A673 (cell line): ENCODE measurements at regions of chr12 and their contacts with region 1.

Region 1: DNA sequence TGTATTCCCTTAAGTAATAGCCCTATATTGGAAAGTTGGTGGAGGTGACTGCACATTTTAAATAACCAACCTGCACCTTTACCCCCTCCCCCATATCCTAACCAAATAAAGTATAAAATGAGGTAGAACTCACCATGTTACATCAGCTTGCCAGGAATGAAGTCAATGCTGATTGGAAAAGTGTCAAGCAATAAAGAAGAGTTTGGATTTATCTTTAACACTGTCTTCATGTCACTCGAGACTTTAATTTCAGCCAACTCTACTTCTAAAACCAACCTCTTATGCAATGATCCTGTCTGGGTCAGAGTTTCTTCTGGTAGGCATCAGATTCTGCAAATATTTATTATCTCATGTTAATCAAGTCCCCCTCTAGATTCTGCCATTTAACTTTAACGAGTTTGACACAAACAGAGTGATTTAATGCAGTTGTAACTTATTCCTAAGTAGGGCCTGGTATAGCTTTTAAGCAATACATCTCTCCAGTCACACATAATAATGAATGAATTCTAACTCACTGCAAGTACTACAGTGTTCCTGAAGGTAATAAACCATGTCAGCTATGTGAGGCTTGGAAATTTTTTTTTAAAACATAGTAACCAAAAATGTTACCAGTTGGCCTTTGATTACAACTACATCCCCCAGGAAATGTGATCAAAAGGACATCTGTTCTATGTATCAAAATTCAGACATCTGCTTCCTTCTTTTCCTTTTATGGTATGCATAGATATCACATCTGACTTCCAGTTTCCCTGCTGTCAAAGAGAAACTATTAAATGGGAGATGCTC is 98.7 kb downstream of the ERGIC2 start:
- DNase-seq: peak; percentile 76
- H3K4me3 ChIP-seq: no peak overlapping the region
- H3K27ac ChIP-seq: peak overlapping the region; percentile 68
- H3K4me1 ChIP-seq: peaks cover 23% of the 10 kb centered on the region
- H3K27me3 ChIP-seq: no peaks in the 10 kb centered on the region
- CTCF ChIP-seq: no peak

Region 2: GRCh38 chr12:27602516-27602915 is 1679.7 kb before region 1 on chr12:
- CTCF ChIA-PET with region 1: no interaction called
- POLR2A ChIA-PET with region 1: no interaction called
- intact Hi-C with region 1: loop called (anchors 10 kb)
- DNase-seq: no peak
- H3K4me3 ChIP-seq: no peak overlapping the region
- H3K27ac ChIP-seq: no peak overlapping the region
- H3K4me1 ChIP-seq: peaks cover 4% of the 10 kb centered on the region
- H3K27me3 ChIP-seq: no peaks in the 10 kb centered on the region
- CTCF ChIP-seq: no peak

Region 3: DNA sequence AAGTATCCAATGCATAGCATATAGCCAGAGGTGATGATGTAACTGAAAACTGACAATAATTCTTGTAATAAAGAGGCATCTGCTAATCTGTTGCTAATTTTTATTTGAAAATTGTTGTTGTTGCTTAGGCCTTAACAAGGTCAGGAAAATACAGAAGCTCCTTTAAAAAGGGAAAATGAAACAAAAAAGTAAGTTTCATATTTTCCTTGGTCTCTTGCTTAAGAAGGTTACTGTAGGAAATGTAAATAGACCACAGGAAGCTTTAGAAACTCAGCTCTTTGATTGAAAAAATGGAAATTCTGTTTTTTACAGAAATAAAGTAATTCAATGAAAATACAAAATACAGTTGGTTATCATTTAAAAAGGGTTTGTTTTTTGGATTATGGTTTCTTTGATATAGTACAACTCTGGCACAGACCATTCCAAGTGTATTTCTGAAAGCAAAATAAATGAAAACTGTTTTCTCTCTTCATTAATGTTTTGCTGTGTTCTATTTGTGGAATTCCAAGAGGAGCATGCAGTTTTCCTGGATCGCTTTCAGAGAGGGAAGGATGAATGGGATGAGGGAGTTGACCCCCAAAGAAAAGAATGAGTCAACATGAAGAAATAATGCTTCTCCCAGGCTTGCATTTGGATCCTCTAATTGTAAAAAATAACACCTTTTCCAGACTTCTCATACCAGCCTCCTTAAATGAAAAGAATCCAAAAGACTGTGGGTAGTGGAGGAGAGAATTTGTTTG is 531.1 kb before region 1 on chr12:
- CTCF ChIA-PET with region 1: no interaction called
- POLR2A ChIA-PET with region 1: no interaction called
- intact Hi-C with region 1: no loop called
- DNase-seq: no peak
- H3K4me3 ChIP-seq: no peak overlapping the region
- H3K27ac ChIP-seq: no peak overlapping the region
- H3K4me1 ChIP-seq: no peaks in the 10 kb centered on the region
- H3K27me3 ChIP-seq: no peaks in the 10 kb centered on the region
- CTCF ChIP-seq: no peak

Region 4: GRCh38 chr12:30012816-30013449 is 730.7 kb after region 1 on chr12:
- CTCF ChIA-PET with region 1: no interaction called
- POLR2A ChIA-PET with region 1: no interaction called
- intact Hi-C with region 1: no loop called
- DNase-seq: no peak
- H3K4me3 ChIP-seq: no peak overlapping the region
- H3K27ac ChIP-seq: no peak overlapping the region
- H3K4me1 ChIP-seq: peaks cover 3% of the 10 kb centered on the region
- H3K27me3 ChIP-seq: no peaks in the 10 kb centered on the region
- CTCF ChIP-seq: no peak